ENCODE measurements at regions of chr5 and their contacts with region 1.

Region 1: GRCh38 chr5:141691867-141692532 is 10.0 kb upstream of the ARAP3 start:
- DNase-seq: peak; percentile 88
- CTCF ChIP-seq: peak; percentile 98

Region 2: GRCh38 chr5:141223112-141223783 is 468.8 kb before region 1 on chr5 and contains the start of gene PCDHB14:
- CTCF ChIA-PET with region 1: no interaction called
- POLR2A ChIA-PET with region 1: no interaction called
- DNase-seq: no peak
- CTCF ChIP-seq: no peak

Region 3: DNA sequence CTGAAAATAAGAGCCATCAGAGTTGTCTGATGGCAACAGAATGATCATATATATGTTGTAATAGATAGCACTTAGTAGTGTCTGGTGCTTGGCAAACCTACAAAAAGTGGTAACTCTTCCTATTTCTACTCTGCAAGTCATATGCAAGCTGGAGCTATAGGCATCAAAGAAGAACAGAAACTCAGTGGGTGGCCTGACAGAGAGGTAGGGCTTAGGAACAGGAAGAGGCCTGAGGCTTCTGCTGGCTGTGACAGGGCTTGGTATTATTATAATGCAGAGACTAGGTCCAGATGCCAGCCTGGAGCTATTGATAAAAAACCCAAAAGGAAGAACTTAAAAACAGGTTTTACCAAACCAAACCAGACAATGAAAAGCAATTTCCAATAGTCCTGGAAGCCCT is 68.8 kb before region 1 on chr5:
- CTCF ChIA-PET with region 1: no interaction called
- POLR2A ChIA-PET with region 1: no interaction called
- DNase-seq: peak; percentile 52
- CTCF ChIP-seq: no peak

Region 4: DNA sequence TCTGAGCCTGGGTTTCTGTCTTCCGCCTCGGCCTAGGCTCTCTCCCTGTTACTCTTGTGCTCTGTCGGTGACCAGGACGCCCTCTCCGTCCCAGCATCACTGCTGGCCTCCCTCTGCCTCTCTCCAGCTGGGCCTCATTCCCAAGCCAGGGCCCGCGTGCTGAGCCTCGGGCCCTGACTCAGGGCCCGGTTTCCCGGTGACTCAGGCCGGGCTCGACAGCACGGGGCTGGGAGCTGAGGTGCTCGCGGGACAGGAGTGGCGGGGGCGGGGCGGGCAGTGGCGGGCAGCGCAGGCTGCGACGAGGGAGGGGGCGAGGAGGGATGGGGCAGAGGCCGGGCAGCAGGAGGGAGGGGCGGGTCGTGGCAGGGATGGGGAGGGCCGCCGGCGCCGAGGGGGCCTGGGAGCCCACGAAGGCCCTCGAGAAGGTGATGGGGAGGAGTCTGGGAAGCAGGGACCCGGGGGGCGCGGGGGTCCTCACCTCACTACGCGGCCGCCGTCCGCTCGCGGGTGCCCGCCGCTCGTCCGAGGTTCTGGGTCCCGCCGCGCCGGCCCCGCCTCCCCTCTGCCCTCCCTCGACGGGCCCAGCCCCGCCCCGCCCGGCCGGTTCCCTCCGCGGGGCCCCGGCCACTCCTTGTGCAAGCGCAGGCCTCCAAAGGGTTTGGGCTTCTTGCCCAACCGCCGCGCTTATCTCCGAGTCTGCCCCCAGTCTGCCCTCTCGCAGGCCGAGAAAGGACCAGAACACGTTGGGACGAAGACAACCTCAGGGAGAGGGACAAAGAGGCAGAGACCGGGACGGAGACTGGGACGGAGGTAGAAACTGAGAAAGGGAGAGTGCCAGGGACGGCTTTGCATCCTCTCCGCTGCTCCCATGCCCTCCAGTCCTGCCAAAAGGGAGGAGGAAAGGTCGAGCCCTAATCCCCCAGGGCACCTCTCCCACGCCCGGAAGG is 10.0 kb before region 1 on chr5 and contains the start of gene ARAP3:
- CTCF ChIA-PET with region 1: interaction called, 38 read pairs
- POLR2A ChIA-PET with region 1: no interaction called
- DNase-seq: no peak
- CTCF ChIP-seq: no peak

Region 5: GRCh38 chr5:141811287-141812155 is 119.5 kb after region 1 on chr5:
- CTCF ChIA-PET with region 1: interaction called, 34 read pairs
- POLR2A ChIA-PET with region 1: no interaction called
- DNase-seq: peak; percentile 72
- CTCF ChIP-seq: peak; percentile 50

Region 6: DNA sequence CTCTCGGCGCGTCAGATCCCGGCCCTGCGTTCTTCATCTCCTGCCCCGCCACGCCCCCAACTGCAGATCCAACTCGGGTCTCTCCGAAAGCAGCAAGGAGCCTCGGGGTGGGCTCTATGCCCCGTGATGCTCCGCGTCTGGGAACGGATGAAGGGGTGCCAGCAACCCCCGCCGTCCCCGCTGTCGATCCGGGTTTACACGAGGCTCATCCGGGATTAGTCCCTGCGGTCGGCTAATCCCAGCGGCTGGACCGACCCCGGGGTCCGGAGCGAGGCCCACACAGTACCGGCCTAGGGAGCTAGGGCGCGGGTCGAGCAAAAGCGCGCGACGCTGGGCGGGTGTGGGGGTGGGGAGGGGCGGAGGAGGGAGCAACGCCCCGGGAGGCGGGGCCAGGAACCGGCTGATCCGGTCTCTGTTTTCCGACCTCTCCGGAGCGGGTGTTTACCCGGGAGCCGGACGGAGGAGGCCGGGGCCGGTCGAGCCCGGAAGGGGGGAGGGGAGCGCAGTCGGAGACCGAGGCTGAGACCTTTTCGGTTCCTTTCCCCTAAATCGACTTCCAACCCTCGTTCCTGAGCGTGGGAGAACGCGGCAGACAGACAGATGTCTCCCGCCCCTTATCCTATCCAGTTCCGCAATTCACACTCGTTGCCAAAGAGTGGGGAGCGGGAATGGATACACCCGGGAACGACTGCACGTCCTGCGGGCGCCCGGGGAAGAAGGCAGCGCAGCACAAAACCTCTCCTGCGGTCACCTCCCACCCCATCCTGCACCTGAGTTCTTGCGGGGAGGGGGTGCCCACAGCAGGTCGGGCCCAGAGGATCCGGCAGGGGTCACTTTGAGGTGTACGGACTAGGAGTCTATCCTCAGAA is 157.6 kb after region 1 on chr5:
- CTCF ChIA-PET with region 1: no interaction called
- POLR2A ChIA-PET with region 1: no interaction called
- DNase-seq: peak; percentile 86
- CTCF ChIP-seq: no peak

Region 7: GRCh38 chr5:141878711-141879425 is 186.9 kb after region 1 on chr5:
- CTCF ChIA-PET with region 1: interaction called, 158 read pairs
- POLR2A ChIA-PET with region 1: interaction called, 3 read pairs
- DNase-seq: peak; percentile 84
- CTCF ChIP-seq: peak; percentile 89

Region 8: DNA sequence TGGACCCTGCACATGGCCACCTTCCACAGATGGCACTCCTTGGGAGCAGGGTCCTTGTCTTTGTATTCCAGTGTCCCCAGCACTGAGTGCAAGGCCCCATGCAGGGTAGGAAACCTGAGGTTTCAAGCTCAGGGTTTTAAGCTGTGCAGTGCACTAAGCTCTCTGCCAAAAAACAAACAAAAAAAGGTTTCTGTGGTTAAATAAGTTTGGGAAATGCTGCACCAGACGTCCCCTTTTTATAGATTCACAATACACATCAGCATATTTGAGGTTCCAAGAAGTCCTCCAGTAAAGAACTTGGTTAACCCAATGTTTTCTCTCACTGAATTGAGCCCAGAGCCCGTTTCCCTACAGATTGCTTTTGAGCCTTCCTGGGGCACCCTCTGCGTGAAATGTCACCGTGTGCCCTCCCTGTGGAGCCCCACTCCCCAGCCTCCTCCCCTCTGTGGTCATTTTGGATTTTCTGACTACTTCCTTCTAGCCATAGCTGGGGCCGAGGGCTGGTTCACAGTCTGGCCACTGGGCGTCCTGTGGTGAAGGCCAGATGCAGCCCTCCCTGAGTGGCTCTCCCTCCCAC is 248.8 kb after region 1 on chr5:
- CTCF ChIA-PET with region 1: interaction called, 14 read pairs
- POLR2A ChIA-PET with region 1: no interaction called
- DNase-seq: no peak
- CTCF ChIP-seq: no peak

Region 9: GRCh38 chr5:141968914-141969608 is 277.1 kb after region 1 on chr5 and contains the start of gene RNF14:
- CTCF ChIA-PET with region 1: interaction called, 21 read pairs
- POLR2A ChIA-PET with region 1: no interaction called
- DNase-seq: peak; percentile 95
- CTCF ChIP-seq: peak; percentile 87